Ascending aorta (tissue), 2 donors: ENCODE measurements at regions of chr7 and their contacts with region 1.

Region 1: DNA sequence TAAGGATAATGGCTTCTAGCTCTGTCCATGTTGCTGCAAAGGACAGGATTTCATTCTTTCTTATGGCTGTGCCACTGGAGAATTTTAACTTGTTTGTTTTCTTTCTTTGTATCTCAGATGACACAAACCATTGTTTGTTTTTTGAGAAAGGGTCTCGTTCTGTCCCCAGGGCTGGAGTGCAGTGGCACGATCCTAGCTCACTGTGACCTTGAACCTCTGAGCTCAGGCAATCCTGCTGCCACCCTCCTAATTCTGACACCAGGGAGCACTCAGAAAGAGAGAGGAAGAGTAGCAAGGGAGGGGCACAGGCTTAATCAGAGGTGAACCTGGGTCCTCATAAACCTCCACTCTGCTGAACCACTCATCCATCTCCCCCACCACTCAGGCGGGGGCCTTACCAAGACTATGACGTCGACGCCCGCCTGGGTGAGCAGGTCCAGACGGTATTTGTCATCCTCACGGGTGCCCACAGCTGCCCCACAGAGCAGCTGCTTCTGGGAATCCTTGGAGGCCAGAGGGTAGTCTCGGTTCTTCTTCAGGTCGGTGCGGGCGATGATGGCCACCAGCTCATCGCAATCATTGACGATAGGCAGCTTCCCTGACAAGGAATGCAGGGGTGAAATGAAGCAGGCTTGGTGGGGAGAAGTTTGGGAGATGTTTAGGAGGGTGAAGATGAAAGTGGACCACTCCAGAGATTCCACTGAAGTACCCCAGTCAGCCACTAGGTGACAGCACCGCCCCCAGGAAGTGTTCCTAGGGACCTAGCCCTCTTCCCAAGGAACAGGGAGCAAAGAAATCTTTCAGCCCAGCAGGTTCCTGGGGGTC is 11.6 kb downstream of the IMPDH1 start:
- DNase-seq: no peak
- H3K4me3 ChIP-seq: no peak overlapping the region
- H3K27ac ChIP-seq: no peak overlapping the region
- H3K4me1 ChIP-seq: no peaks in the 10 kb centered on the region
- H3K27me3 ChIP-seq: no peaks in the 10 kb centered on the region
- CTCF ChIP-seq: peak; percentile 83 to 91 (median 89)

Region 2: DNA sequence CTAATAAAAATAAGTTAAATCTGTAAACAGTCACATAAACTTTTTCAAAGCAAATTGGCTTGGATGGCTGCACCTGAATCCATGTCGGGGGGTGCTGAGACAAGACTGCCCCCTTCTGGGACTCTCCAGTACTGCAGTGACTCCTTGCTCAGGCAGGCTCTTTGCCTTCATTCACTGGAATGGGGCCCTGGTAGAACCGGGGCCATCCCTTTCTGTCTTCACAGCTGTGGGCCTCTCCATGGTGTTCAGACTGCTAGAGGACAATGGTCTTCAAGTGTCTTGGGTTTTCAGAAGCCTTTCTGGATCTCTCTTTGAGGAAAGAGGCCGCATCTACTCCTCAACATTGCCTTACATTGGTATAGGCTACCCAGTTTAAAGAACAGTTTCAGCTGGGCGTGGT is 27.6 kb after region 1 on chr7:
- intact Hi-C with region 1: loop called (anchors 2 kb)
- DNase-seq: peak in 1 of 2 donors; percentile 80
- H3K4me3 ChIP-seq: no peak overlapping the region
- H3K27ac ChIP-seq: no peak overlapping the region
- H3K4me1 ChIP-seq: no peaks in the 10 kb centered on the region
- H3K27me3 ChIP-seq: no peaks in the 10 kb centered on the region
- CTCF ChIP-seq: peak; percentile 65 to 86 (median 72)